Activated naive CD4-positive, alpha-beta T cell treated with anti-CD3 and anti-CD28 coated beads for 36 hours (primary cell): ENCODE measurements at regions of chr7 and their contacts with region 1.

Region 1: GRCh38 chr7:134920026-134920753 is 66.1 kb upstream of the AGBL3 start:
- DNase-seq: no peak
- H3K4me3 Mint-ChIP-seq: no peak overlapping the region
- H3K27ac Mint-ChIP-seq: no peak overlapping the region
- H3K4me1 Mint-ChIP-seq: peaks cover 13% of the 10 kb centered on the region
- H3K27me3 Mint-ChIP-seq: no peaks in the 10 kb centered on the region

Region 2: DNA sequence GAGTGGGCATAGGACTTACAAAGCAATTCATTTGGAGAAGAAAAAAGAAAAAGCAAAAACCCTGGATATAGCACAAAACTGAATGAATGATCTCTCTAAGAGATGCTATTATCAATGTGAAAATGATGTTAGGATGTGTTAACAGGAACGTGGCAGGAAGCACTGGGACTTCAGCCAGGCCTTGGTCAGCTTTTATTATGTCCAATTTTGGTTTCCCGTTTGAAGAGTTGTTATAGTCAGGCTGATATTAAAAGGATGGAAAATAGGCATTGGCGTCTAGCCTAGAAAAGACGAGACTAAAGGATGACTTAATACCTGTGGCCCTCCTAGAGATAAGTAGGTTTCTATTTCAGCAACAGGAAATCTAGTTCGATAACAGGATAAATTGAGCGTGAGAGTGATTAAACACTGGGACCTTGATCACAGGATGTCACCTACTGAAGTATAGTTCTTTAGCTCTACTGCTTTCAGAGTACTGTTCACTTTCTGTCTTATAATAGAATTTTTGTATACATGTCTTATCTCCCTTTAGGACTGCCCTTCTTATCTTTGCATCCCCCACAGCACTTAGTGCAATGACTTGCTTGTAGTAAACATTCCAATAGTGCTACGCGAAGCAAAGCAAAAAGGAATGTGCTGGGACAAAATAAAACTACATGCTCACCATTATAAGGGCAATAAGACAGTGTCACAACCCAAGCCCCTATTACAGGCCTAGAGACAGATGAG is 33.7 kb before region 1 on chr7:
- CTCF ChIA-PET with region 1: no interaction called
- intact Hi-C with region 1: loop called (anchors 1 kb)
- DNase-seq: no peak
- H3K4me3 Mint-ChIP-seq: no peak overlapping the region
- H3K27ac Mint-ChIP-seq: peak overlapping the region; percentile 29
- H3K4me1 Mint-ChIP-seq: peaks cover 28% of the 10 kb centered on the region
- H3K27me3 Mint-ChIP-seq: no peaks in the 10 kb centered on the region

Region 3: GRCh38 chr7:134908289-134908688 is 11.9 kb before region 1 on chr7:
- CTCF ChIA-PET with region 1: no interaction called
- intact Hi-C with region 1: loop called (anchors 1 kb)
- DNase-seq: peak; percentile 17
- H3K4me3 Mint-ChIP-seq: no peak overlapping the region
- H3K27ac Mint-ChIP-seq: no peak overlapping the region
- H3K4me1 Mint-ChIP-seq: peaks cover 15% of the 10 kb centered on the region
- H3K27me3 Mint-ChIP-seq: no peaks in the 10 kb centered on the region

Region 4: DNA sequence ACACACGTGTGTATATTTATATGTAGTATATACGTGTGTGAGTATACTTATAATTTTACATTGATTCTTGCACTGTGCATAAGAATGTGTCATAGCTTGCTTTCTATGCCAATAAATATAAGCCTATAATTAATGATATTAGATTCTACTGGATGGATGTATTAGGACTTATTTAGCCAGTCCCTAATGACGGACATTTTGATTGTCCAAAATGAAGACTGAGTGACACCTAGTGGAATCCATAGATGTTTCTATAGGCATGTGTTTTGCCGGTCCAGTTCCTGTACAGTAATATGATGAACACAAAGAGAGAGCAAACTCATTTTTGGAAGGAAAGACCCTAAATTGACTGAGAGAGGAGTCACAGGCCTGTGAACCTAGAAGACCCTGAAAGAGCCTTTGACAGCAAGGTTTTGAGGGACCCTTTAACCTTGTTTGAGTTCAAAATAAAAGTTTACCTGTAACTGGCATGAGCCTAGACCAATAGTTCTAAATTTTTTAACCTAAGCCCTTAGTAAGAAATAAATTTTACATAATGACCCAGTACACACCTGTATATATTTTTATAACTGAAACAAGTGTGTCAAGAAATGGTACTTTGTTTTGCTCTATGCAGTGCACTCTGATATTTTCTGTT is 23.7 kb after region 1 on chr7:
- CTCF ChIA-PET with region 1: no interaction called
- intact Hi-C with region 1: loop called (anchors 2 kb)
- DNase-seq: no peak
- H3K4me3 Mint-ChIP-seq: no peak overlapping the region
- H3K27ac Mint-ChIP-seq: no peak overlapping the region
- H3K4me1 Mint-ChIP-seq: peaks cover 18% of the 10 kb centered on the region
- H3K27me3 Mint-ChIP-seq: no peaks in the 10 kb centered on the region

Region 5: GRCh38 chr7:135023622-135024021 is 103.4 kb after region 1 on chr7:
- CTCF ChIA-PET with region 1: no interaction called
- intact Hi-C with region 1: no loop called
- DNase-seq: no peak
- H3K4me3 Mint-ChIP-seq: no peak overlapping the region
- H3K27ac Mint-ChIP-seq: no peak overlapping the region
- H3K4me1 Mint-ChIP-seq: no peaks in the 10 kb centered on the region
- H3K27me3 Mint-ChIP-seq: no peaks in the 10 kb centered on the region